ENCODE measurements at regions of chr10 and their contacts with region 1.

Region 1: GRCh38 chr10:14397066-14397465 is 66.3 kb upstream of the FRMD4A start:
- DNase-seq: peak; percentile 96
- H3K4me3 ChIP-seq: no peak overlapping the region
- H3K27ac ChIP-seq: peak overlapping the region; percentile 95
- H3K27me3 ChIP-seq: peaks cover 4% of the 10 kb centered on the region
- CTCF ChIP-seq: no peak

Region 2: GRCh38 chr10:14385596-14386593 is 11.2 kb before region 1 on chr10:
- CTCF ChIA-PET with region 1: interaction called, 20 read pairs
- POLR2A ChIA-PET with region 1: interaction called, 9 read pairs
- DNase-seq: peak; percentile 64
- H3K4me3 ChIP-seq: no peak overlapping the region
- H3K27ac ChIP-seq: no peak overlapping the region
- H3K27me3 ChIP-seq: peaks cover 3% of the 10 kb centered on the region
- CTCF ChIP-seq: peak; percentile 16; the same call in 1 of the 2 replicates

Region 3: GRCh38 chr10:14450041-14450491 is 53.0 kb after region 1 on chr10:
- CTCF ChIA-PET with region 1: no interaction called
- POLR2A ChIA-PET with region 1: interaction called, 14 read pairs
- DNase-seq: no peak
- H3K4me3 ChIP-seq: no peak overlapping the region
- H3K27ac ChIP-seq: peak overlapping the region; percentile 53
- H3K27me3 ChIP-seq: peaks cover 2% of the 10 kb centered on the region
- CTCF ChIP-seq: no peak